Dendritic cell treated with granulocyte-macrophage colony-stimulating factor and Interleukin-4, amounts not matched to agents 40 ng/mL and 50 ng/mL, for 4 days (primary cell): ENCODE measurements at regions of chr9 and their contacts with region 1.

Region 1: GRCh38 chr9:613771-614347 is 227.6 kb upstream of the DMRT1 start:
- H3K4me3 Mint-ChIP-seq: peak overlapping the region; percentile 4
- H3K27ac Mint-ChIP-seq: peak overlapping the region; percentile 82
- H3K4me1 Mint-ChIP-seq: peaks cover 25% of the 10 kb centered on the region
- H3K27me3 Mint-ChIP-seq: no peaks in the 10 kb centered on the region

Region 2: GRCh38 chr9:272251-273213 is 341.3 kb before region 1 on chr9:
- intact Hi-C with region 1: no loop called
- H3K4me3 Mint-ChIP-seq: peak overlapping the region; percentile 63
- H3K27ac Mint-ChIP-seq: peak overlapping the region; percentile 89
- H3K4me1 Mint-ChIP-seq: peaks cover 62% of the 10 kb centered on the region
- H3K27me3 Mint-ChIP-seq: no peaks in the 10 kb centered on the region

Region 3: DNA sequence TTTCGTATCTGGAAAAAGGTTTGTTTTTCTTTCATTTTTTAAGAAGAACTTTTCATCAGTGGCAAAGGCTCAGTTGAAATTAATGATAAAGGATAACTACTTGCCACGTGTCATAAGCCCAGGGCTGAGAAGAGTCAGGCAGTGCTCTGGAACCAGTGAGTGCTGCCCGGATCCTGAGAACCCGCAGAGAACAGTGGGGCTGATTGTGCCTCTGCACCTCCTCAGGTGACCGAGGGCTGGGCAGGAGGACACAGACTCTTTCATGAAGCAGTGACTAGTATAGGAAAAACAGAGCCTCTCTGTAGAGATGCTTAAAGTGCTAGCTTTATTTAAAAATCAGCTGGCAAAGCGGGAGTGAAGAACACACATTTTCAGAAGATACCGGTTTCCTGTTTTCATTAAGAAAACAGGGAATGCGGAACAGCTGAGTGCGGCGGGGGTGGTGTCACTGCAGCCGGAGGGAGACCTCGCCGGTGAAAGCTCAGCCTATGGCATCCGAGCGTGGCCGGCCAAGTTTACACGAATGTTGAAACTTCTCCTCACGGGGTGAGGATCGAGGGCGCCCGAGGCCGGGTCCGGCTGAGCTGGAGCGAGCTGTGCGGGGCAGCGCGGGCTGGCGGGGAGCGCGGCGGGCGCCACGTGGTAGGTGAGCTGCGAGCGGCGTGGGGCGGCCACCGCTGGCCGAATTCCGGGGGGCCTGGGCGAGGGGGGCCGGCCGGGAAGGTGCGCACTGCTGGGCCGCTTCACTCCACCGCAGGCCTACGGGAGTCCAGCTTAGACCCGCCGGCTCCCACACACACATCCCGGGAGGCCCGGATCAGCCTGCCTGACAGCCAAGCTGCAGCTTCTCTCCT is 93.0 kb after region 1 on chr9:
- intact Hi-C with region 1: loop called (anchors 10 kb)
- H3K4me3 Mint-ChIP-seq: peak overlapping the region; percentile 77
- H3K27ac Mint-ChIP-seq: peak overlapping the region; percentile 77
- H3K4me1 Mint-ChIP-seq: peaks cover 23% of the 10 kb centered on the region
- H3K27me3 Mint-ChIP-seq: peaks cover 8% of the 10 kb centered on the region

Region 4: DNA sequence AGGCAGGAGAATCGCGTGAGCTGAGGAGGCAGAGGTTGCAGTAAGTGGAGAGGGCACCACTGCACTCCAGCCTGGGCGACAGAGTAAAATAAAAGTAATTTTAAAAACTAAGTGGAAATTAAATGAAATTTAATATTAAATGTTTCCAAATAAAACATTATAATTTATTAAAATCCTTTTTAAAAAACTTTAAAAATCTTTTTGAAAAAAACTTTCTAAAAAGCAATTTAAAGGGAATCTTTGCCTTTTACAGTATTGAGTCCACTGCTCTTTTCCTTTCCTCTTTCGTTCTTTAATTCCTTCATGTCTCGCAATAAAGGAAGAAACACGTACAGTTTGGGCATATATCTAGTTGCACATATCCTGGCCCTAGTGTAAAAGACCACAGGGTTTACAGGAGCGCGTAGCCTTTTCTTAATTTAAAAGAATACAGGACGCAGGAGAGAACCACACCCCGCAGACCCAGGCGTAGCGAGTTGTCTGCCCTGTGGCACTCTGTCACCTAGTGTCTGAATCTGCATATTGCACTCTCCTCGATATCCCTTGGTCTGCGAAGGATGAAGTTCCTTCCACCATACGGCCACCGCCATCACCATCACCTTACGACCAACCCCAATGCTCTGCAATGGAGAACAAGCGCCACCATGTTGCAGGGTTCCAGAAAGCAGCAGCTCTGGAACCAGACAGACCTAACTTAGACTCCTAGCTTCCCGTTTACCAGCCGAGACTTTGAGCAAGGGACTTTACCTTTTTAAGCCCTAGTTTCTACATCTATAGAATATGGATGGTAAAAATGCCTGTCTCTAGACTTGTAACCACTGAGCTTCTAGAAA is 150.0 kb after region 1 on chr9:
- intact Hi-C with region 1: loop called (anchors 1 kb)
- H3K4me3 Mint-ChIP-seq: no peak overlapping the region
- H3K27ac Mint-ChIP-seq: no peak overlapping the region
- H3K4me1 Mint-ChIP-seq: peaks cover 8% of the 10 kb centered on the region
- H3K27me3 Mint-ChIP-seq: no peaks in the 10 kb centered on the region

Region 5: DNA sequence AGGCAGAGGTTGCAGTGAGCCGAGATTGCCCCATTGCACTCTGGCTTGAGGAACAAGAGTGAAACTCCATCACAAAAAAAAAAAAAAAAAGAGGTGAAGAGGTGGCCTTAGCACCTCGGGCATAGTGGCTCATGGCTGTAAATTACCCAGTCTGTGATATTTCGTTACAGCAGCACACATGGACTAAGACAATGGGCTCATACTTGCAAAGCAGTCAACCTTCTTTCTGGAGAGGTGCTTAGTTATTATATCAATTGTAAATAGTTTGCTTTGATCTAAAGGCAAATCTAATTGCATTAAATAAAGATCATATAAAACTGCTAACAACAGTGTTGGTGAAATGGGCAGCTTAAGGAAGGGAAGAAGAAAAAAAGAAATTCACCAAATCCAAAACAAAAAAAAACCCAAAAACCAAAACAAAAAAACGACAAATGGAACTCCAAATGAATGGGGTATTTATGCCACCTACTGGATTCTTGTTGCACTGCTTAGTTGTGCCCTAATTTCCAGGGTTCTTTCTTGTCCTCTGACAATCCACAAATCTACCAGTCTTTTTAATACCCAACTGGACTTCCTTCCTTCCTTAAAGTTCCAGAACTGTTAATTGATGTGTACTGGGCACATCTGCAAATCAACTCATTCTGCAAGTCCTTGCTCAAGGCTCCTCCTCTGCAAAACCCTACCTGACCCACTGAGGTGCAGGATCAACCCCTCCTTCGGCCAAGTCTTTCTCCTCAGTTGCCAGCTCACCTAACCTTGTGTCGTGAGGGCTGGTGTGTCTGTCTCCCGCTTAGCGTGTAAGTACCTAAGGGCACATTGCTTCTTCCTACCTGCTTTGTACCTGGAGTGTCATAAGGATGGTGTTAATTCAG is 192.7 kb after region 1 on chr9:
- intact Hi-C with region 1: loop called (anchors 1 kb)
- H3K4me3 Mint-ChIP-seq: no peak overlapping the region
- H3K27ac Mint-ChIP-seq: no peak overlapping the region
- H3K4me1 Mint-ChIP-seq: no peaks in the 10 kb centered on the region
- H3K27me3 Mint-ChIP-seq: peaks cover 4% of the 10 kb centered on the region

Region 6: GRCh38 chr9:893843-894420 is 280.1 kb after region 1 on chr9:
- intact Hi-C with region 1: loop called (anchors 5 kb)
- H3K4me3 Mint-ChIP-seq: no peak overlapping the region
- H3K27ac Mint-ChIP-seq: no peak overlapping the region
- H3K4me1 Mint-ChIP-seq: peaks cover 10% of the 10 kb centered on the region
- H3K27me3 Mint-ChIP-seq: peaks cover 8% of the 10 kb centered on the region

Region 7: GRCh38 chr9:1009101-1009707 is 395.3 kb after region 1 on chr9:
- intact Hi-C with region 1: loop called (anchors 2 kb)
- H3K4me3 Mint-ChIP-seq: no peak overlapping the region
- H3K27ac Mint-ChIP-seq: no peak overlapping the region
- H3K4me1 Mint-ChIP-seq: peaks cover 19% of the 10 kb centered on the region
- H3K27me3 Mint-ChIP-seq: peaks cover 2% of the 10 kb centered on the region